ENCODE measurements at regions of chr18 and their contacts with region 1.

Region 1: DNA sequence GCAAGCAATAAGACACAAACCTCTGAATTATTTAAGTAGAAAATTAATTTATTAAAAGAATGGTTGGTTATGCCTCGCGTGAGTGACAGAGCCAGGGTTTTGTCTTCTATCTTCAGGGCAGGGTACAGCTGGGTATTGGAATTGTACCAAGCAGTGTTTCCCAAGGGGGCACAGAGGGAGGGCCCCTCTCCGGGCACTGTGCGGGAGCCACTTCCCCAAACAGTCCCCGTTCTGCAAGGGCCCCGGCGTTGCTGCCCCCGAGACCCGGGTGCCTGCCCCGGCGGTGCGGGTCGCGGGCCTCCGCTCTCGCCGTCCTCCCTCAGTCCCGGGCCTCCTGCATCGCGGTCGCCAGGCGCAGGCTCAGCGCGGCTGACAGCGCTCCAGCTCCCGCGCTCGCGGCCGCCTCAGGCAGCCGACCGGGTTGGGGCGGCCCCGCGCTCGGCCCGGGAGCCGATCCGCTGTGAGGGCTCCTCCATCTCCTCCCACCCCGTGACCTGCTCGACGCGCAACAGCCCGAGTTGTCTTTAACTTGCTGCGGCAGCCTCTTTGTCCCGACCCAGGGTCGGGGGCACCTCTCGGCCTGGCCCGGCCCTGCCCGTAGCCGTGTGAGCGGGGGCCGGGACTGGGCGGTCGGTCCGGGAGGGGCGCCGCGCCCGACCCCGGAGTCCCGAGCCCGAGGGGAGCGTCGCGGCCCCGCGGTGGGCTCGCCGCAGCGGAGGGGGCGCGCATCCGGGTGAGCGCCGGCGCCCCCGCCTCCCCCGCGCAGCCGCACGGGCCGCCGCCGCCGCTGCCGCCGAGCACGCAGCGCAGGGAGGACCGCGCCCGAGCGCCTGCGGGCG is 620 bp upstream of the GALNT1 start:
- DNase-seq: peak; percentile 68 to 80
- ATAC-seq: peak; percentile 77 to 85 (median 82)
- H3K4me3 ChIP-seq: peak overlapping the region; percentile 95
- H3K27ac ChIP-seq: peak overlapping the region; percentile 98
- H3K4me1 ChIP-seq: peaks cover 17% of the 10 kb centered on the region
- H3K27me3 ChIP-seq: no peaks in the 10 kb centered on the region
- CTCF ChIP-seq: no peak

Region 2: DNA sequence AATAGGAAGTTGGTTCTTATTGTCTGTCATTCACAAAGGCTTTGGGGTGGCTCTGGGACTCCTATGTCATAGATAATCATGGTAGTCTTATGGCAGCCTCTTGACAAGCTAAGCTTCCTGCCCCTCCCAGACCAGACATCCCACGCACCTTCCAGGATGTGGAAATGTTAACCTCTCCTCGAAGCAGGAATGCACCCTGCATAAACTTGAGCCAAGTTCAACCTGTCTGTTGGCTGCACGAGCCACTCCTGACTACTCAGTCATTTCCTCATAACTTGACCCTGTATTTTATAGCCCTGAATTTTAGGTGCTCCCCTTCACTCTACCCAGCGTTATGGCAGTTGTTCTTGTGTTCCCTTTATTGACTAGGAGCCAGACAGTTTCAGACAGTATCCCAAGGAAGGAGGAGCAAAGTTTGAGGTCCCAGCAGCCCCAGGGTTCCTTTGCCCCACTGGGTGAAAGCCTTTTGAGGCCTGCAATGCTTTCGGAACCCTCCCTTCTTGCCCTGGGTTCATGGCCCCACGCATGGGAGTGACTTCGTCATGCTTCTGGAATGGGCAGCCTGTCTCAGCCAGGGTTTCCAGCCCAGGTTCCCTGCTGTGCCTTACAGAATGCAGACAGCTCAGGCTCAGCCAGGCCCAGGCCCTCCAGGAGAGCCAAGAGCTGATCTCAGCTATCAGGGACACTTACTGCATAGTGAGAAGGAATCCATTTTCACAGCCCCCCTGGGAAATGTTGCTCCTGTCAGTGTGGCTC is 67.6 kb before region 1 on chr18:
- intact Hi-C with region 1: loop called in 1 of 2 experiments (anchors 5 kb)
- DNase-seq: peak; percentile 31 to 74
- ATAC-seq: peak; percentile 87 to 97 (median 95)
- H3K4me3 ChIP-seq: no peak overlapping the region
- H3K27ac ChIP-seq: peak overlapping the region; percentile 67
- H3K4me1 ChIP-seq: peaks cover 21% of the 10 kb centered on the region
- H3K27me3 ChIP-seq: no peaks in the 10 kb centered on the region
- CTCF ChIP-seq: no peak

Region 3: DNA sequence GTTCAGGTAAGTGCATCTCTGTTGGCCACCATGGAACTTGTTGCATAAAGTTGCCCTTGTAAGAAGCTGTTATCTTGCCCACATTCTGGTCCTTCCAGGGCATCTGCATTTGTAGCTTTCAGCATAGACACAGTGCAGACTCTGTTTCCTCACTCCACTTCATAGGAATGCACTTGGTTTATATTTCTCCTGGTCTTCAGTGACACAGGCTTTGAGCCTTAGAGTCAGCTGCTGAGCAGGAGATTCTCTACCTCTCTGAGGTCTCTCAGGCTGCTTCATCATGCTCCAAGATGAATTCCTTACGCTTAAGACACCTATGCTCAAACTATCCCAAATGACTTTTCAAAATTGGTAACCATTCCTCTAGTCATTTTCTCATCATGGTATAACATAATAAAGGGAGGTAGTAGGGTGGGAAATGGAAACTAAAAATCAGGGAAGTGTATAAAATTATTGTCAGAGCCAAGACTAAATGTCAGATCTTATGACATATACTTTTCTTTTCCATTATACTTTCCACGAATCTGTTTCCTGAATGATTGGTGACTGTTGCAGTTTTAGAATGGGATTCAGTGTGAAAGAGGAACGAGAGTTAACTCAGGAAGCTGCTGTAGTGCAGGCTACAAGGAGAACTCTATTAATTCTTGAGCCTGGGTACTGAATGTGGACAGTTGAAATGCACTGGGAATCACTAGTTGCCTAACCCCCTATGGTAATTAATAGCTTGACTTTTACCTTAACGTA is 72.6 kb after region 1 on chr18:
- intact Hi-C with region 1: loop called in 1 of 2 experiments (anchors 5 kb)
- DNase-seq: no peak
- ATAC-seq: peak; percentile 36 to 57 (median 48)
- H3K4me3 ChIP-seq: no peak overlapping the region
- H3K27ac ChIP-seq: no peak overlapping the region
- H3K4me1 ChIP-seq: peaks cover 38% of the 10 kb centered on the region
- H3K27me3 ChIP-seq: no peaks in the 10 kb centered on the region
- CTCF ChIP-seq: no peak

Region 4: GRCh38 chr18:35695803-35696202 is 114.9 kb after region 1 on chr18:
- intact Hi-C with region 1: loop called in 1 of 2 experiments (anchors 10 kb)
- DNase-seq: peak; percentile 19 to 67
- ATAC-seq: peak; percentile 80 to 96 (median 92)
- H3K4me3 ChIP-seq: no peak overlapping the region
- H3K27ac ChIP-seq: no peak overlapping the region
- H3K4me1 ChIP-seq: peaks cover 5% of the 10 kb centered on the region
- H3K27me3 ChIP-seq: no peaks in the 10 kb centered on the region
- CTCF ChIP-seq: no peak

Measured in psoas muscle (tissue), 8 donors.